GM13977 (cell line): ENCODE measurements at regions of chr11 and their contacts with region 1.

Region 1: DNA sequence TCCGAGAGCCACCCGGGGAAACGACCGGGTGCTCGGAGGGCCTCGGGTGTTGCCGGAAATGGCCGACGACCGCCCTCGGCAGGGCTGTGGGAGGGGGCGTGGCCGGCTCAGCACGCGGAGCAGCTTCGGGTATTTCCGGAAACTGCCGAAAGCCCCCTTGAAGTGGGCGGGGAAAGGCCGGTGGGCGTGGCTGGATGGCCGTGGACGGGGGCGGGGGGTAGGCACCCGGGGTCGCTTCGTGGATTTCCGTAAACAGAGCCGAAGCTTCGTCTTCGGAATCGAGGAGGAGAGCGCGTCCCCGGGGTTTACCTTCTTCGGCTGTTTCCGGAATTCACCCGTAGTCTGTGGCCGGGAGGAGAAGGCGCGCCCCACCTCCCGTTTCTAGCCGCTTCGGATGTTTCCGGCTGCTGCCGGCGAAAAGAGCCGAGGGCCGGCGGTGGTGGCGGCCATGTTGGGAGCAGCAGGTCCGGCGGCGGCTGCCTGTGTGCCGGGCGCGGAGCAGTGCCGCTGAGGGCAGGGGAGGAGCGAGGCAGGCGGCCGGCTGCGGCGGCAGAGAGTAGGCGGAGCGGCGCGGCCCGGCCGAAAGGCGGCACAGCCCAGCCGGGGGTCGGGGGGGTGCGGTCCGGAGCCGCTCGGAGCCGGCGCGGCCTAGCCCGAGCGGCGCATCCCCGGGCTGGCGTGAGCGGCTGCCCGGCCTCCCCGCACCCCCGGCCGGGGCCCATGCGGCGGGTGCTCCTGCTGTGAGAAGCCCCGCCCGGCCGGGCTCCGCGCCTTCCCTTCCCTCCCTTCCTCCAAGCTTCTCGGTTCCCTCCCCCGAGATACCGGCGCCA is at the start of gene MARK2:
- DNase-seq: peak; percentile 98
- CTCF ChIP-seq: no peak

Region 2: DNA sequence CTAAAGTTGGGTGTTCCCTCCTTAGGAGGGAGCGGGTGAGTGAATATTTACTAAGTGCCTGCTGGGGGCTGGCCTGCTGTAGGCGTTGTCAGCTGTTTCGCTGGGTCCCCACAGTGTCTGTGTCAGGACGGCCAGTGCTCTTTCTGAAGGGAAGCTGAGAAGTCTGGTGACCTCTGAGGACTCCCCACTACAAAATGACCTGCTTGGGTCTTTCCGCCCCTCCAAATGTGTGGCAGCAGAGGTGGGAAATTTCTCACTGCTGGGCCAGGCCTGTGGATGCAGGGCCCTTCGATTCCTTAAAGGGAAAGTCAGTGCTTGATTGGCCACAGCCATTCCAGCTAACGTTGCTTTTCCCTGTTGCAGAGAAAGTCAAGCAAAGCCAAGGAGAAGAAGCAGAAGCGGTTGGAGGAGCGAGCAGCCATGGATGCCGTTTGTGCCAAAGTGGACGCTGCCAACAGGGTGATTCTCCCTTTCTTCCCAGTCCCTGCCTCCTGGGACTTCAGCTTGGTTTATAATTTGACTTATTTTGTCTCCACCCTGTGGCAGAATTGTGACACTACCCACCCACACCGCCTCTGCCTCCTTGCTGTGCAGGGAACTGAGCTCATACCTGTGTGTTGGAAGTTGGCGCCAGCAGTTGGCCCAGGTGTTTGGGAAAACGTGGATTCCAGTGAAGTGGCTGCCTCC is 106.7 kb after region 1 on chr11:
- in situ Hi-C with region 1: loop called (anchors 10 kb)
- DNase-seq: peak; percentile 58
- CTCF ChIP-seq: peak; percentile 68

Region 3: DNA sequence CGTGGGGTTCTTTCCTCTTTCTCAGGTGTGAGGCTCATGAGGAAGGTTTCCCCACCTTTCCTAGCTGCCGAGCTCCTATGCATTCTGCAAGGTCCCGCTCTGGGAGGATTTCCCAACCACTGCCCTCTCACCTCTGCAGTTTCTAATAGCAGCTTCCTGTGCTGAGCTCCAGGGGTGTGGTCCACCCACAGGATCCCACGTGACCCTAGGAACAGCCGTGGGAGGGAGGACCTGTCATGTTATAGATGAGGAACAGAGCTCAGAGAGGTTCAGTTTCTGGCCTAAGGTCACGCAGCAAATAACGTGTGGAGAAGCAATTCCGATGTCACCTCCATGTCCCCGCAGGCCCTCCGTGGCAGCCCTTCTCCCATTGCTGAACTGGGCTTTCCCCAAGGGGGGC is 235.3 kb after region 1 on chr11:
- in situ Hi-C with region 1: no loop called
- DNase-seq: no peak
- CTCF ChIP-seq: no peak